ENCODE measurements at regions of chr15 and their contacts with region 1.

Region 1: GRCh38 chr15:51162865-51163762 is 68.4 kb upstream of the TNFAIP8L3 start:
- DNase-seq: no peak
- H3K4me3 ChIP-seq: peak overlapping the region; percentile 39
- CTCF ChIP-seq: peak; percentile 85

Region 2: DNA sequence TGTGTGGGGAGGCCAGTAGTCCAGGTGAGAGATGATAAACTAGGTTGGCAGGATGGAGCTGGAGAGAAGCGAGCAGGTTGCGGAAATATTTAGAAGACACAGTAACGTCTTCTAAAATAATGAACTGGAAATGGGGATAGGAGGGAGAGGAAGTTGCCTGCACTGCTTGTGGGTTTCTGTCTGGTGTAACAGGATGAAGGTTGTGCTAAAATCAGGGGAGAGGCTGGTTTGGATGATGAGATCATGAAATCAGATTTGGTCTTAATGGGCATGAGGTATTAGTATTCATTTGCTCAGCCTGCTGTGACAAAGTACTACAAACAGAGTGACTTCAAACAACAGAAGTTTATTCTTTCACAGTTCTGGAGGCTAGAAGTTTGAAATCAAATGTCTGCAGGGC is 36.3 kb before region 1 on chr15:
- CTCF ChIA-PET with region 1: no interaction called
- POLR2A ChIA-PET with region 1: no interaction called
- DNase-seq: no peak
- H3K4me3 ChIP-seq: no peak overlapping the region
- CTCF ChIP-seq: no peak

Region 3: GRCh38 chr15:51180011-51180410 is 16.9 kb after region 1 on chr15:
- CTCF ChIA-PET with region 1: interaction called, 63 read pairs
- POLR2A ChIA-PET with region 1: no interaction called
- DNase-seq: no peak
- H3K4me3 ChIP-seq: no peak overlapping the region
- CTCF ChIP-seq: no peak

Region 4: GRCh38 chr15:51198701-51199232 is 35.7 kb after region 1 on chr15:
- CTCF ChIA-PET with region 1: interaction called, 150 read pairs
- POLR2A ChIA-PET with region 1: no interaction called
- DNase-seq: no peak
- H3K4me3 ChIP-seq: no peak overlapping the region
- CTCF ChIP-seq: no peak

Region 5: GRCh38 chr15:51227940-51228783 is 65.0 kb after region 1 on chr15:
- CTCF ChIA-PET with region 1: interaction called, 12 read pairs
- POLR2A ChIA-PET with region 1: no interaction called
- DNase-seq: peak; percentile 52
- H3K4me3 ChIP-seq: no peak overlapping the region
- CTCF ChIP-seq: no peak

Region 6: DNA sequence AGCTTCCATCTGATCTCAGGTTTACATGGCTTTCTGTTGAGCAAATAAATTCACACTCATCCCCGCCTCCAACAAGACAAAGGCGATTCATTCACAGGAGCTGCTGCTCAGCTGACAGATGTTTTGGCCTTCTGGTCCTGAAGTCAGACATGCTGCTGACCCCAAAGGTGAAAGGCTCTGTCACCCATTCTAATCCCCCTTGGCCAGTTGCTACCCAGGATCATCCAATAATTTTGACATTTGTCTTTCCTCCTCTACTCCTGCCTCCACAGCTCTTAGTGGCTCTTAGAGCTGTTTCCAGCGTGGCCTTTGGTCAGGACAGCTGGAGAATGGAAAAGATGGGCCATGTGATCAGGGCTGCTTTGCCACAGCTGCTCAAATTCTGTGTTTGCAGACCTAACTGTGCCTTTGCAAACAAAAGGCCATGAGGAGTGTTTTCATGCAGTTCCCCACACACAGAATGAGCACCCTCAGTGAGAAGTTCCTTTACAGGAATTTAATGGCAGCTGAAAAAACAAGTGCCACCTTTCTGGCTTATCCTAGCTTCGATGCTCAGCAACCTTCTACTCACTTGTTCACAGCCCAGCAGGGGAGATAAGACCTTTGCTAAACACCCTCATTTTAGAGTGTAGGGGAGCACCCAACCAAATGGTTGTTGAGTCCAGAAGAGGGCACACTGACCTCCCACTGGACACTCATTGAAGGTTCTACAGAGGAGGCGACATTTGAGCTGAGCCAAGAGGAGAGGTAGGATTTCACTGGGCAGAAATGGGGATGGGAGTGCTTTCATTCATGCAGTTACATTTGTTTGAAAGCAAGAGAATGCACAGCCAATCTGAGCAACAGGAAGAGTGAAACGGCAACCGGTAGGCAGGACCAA is 136.3 kb after region 1 on chr15:
- CTCF ChIA-PET with region 1: no interaction called
- POLR2A ChIA-PET with region 1: no interaction called
- DNase-seq: no peak
- H3K4me3 ChIP-seq: no peak overlapping the region
- CTCF ChIP-seq: no peak

Region 7: DNA sequence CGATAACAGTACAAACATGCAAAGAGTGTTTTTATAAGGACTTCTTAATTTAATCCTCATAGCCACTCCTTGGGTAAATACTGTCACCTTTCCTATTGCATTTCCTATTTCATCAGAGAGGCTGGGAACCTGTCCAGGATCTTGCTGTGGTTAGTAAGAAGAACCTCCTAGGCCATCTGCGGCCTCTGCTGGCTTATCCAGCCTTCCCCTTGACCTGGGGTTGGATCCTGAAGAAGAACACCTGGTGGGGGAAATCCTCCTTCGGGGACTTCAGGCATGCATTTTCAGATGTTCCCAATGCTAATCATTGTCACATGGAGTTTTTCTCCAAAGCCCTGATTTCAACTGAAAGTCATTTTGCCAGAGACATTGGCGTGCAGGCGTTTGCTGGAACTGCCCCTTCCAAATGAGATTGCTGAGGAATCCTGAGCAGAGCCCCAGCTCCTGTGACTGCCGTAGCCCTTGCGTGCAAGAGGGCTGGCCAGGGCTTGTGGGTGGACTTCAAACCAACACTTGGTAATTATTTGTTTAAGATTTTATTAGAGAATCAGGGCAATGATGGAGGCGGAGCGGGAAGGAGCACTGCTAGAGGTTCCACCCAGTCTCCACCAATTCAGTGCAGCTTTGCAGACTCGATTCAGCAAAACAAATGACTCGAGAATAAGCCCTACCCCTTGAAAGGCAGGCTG is 204.0 kb after region 1 on chr15:
- CTCF ChIA-PET with region 1: interaction called, 12 read pairs
- POLR2A ChIA-PET with region 1: no interaction called
- DNase-seq: no peak
- H3K4me3 ChIP-seq: no peak overlapping the region
- CTCF ChIP-seq: no peak

Measured in AG04449 (cell line).